ENCODE measurements at regions of chr12 and their contacts with region 1.

Region 1: DNA sequence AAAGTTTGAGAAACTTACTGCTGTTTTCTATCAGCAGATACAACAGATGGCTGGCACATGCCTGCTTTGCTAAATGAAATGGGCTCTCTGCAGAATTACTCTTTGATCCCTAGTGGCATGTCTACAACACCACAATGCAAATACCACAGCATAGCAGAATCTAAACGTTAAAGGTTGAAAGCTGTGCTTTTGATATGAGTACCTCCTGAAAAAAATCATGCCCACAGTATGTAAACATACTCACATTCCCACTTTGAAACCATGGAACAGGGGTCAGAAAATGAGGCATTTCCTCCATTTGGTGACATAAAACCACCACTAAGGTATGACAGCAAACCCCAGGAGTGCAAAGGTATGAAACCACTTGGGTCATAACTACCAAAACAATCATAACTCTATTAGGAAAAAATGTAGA is 7.5 kb downstream of the WIF1 start:
- DNase-seq: no peak
- H3K4me3 ChIP-seq: no peak overlapping the region
- H3K27ac ChIP-seq: no peak overlapping the region
- H3K4me1 ChIP-seq: no peaks in the 10 kb centered on the region
- H3K27me3 ChIP-seq: no peaks in the 10 kb centered on the region; the same call in 1 of the 2 replicates
- CTCF ChIP-seq: no peak

Region 2: DNA sequence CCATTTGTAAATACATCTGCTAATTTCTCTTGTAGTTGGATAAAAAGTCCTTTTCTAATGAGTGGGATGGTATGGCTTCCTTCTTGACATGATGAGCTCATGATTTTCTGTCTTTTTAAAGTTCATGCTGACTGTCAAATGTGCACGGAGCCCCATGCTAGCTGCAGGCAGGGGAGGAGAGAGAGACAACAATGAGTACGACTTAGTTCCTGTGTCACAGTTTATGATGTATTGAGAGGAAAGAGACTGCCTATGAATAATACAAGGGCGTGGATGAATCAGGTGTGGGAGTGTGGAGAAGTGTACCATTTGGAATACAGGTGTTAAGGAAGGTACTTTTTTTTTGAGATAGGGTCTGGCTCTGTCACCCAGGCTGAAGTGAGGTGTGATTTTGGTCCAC is 299.9 kb before region 1 on chr12:
- CTCF ChIA-PET with region 1: interaction called, 13 read pairs
- POLR2A ChIA-PET with region 1: no interaction called
- intact Hi-C with region 1: no loop called
- DNase-seq: no peak
- H3K4me3 ChIP-seq: no peak overlapping the region
- H3K27ac ChIP-seq: no peak overlapping the region
- H3K4me1 ChIP-seq: peaks cover 54% of the 10 kb centered on the region
- H3K27me3 ChIP-seq: no peaks in the 10 kb centered on the region
- CTCF ChIP-seq: no peak

Region 3: DNA sequence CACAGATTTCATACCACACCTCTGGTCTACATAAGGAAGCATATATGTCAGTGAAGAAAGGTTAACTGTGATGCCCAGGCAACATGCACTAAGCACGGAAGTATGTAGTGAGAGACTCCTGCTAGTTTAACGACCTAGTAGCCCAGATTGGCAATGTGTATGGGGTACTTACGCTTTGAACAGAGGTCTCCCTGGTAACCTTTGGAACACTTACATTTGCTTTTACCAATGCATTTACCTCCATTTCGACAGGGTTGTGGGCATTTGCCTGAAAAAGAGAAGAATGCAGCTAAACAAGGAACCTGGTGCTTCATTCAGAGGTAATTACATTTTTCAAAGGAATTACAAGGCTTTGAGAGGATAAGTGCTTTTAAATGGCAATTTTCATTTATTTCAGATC is 57.8 kb before region 1 on chr12:
- CTCF ChIA-PET with region 1: no interaction called
- POLR2A ChIA-PET with region 1: no interaction called
- intact Hi-C with region 1: no loop called
- DNase-seq: no peak
- H3K4me3 ChIP-seq: no peak overlapping the region
- H3K27ac ChIP-seq: no peak overlapping the region
- H3K4me1 ChIP-seq: no peaks in the 10 kb centered on the region
- H3K27me3 ChIP-seq: no peaks in the 10 kb centered on the region
- CTCF ChIP-seq: no peak